ENCODE measurements at regions of chr12 and their contacts with region 1.

Region 1: DNA sequence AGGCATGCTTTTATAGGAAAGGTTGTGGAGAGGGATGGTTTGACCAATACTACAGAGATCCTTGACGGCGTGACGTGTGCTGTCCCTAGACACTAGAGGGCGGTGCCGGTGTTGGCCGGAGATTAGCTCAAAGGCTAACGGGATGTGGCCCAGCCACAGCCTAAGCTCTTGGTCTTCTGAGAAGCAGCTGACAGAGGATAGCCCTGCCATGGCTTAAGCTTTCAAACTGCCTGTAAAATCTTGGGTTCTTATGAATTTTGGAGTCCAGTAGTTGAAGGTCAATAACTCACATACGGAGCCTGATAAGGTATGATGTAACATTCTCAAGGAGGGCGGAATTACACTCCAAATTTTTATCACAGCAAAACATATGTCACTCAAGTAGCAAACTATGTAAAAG is 515.7 kb upstream of the ATXN7L3B start:
- DNase-seq: peak; percentile 68
- H3K4me3 Mint-ChIP-seq: no peak overlapping the region
- H3K27ac Mint-ChIP-seq: no peak overlapping the region
- H3K4me1 Mint-ChIP-seq: no peaks in the 10 kb centered on the region
- H3K27me3 Mint-ChIP-seq: no peaks in the 10 kb centered on the region
- CTCF ChIP-seq: peak; percentile 56

Region 2: DNA sequence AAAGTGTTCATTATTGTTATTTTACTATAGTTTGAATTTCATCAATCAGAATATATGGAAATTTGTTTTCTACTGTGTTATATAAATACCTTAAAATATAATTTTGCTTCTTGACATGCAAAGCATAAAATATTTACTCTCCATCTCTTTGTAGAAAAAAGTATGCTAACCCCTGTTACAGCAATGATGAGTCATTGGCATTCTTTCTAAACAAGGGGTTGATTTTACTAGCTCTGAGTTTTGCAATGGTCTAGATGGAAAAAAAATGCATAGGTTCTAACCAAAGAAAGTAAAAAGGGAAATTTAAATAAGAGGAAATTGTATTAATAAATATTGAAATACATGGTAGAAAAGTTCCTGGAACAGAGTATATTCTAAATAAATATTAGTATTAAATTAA is 474.5 kb before region 1 on chr12:
- CTCF ChIA-PET with region 1: no interaction called
- POLR2A ChIA-PET with region 1: no interaction called
- intact Hi-C with region 1: no loop called
- DNase-seq: peak; percentile 58
- H3K4me3 Mint-ChIP-seq: no peak overlapping the region
- H3K27ac Mint-ChIP-seq: no peak overlapping the region
- H3K4me1 Mint-ChIP-seq: peaks cover 6% of the 10 kb centered on the region
- H3K27me3 Mint-ChIP-seq: no peaks in the 10 kb centered on the region
- CTCF ChIP-seq: no peak

Region 3: DNA sequence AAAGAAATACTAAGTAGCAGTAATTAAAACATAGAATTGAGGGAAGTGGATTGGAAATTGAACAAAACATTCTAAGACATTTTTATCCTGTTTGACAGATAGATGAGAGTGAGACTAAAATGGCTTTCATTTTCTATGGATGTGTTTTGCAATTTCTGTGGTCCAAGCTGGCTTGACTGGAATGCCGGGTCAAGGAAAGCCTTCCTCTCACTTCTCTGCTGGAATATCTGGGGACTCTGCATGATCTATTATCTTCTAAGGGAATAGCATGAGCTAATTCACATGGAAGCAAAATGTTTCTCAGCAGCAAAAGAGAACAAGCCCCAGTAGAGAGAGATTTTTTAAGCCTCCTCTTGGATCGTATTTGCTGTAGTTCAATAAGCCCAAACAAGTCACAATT is 107.8 kb after region 1 on chr12:
- CTCF ChIA-PET with region 1: no interaction called
- POLR2A ChIA-PET with region 1: no interaction called
- intact Hi-C with region 1: no loop called
- DNase-seq: no peak
- H3K4me3 Mint-ChIP-seq: no peak overlapping the region
- H3K27ac Mint-ChIP-seq: no peak overlapping the region
- H3K4me1 Mint-ChIP-seq: no peaks in the 10 kb centered on the region
- H3K27me3 Mint-ChIP-seq: no peaks in the 10 kb centered on the region
- CTCF ChIP-seq: no peak

Region 4: GRCh38 chr12:74317078-74317601 is 295.2 kb after region 1 on chr12:
- CTCF ChIA-PET with region 1: interaction called, 4 read pairs
- POLR2A ChIA-PET with region 1: interaction called, 3 read pairs
- intact Hi-C with region 1: loop called (anchors 1 kb)
- DNase-seq: peak; percentile 62
- H3K4me3 Mint-ChIP-seq: no peak overlapping the region
- H3K27ac Mint-ChIP-seq: no peak overlapping the region
- H3K4me1 Mint-ChIP-seq: peaks cover 14% of the 10 kb centered on the region
- H3K27me3 Mint-ChIP-seq: no peaks in the 10 kb centered on the region
- CTCF ChIP-seq: peak; percentile 52

Region 5: GRCh38 chr12:74365178-74365964 is 343.4 kb after region 1 on chr12:
- CTCF ChIA-PET with region 1: no interaction called
- POLR2A ChIA-PET with region 1: no interaction called
- intact Hi-C with region 1: loop called (anchors 1 kb)
- DNase-seq: peak; percentile 50
- H3K4me3 Mint-ChIP-seq: no peak overlapping the region
- H3K27ac Mint-ChIP-seq: no peak overlapping the region
- H3K4me1 Mint-ChIP-seq: peaks cover 5% of the 10 kb centered on the region
- H3K27me3 Mint-ChIP-seq: no peaks in the 10 kb centered on the region
- CTCF ChIP-seq: no peak

Region 6: DNA sequence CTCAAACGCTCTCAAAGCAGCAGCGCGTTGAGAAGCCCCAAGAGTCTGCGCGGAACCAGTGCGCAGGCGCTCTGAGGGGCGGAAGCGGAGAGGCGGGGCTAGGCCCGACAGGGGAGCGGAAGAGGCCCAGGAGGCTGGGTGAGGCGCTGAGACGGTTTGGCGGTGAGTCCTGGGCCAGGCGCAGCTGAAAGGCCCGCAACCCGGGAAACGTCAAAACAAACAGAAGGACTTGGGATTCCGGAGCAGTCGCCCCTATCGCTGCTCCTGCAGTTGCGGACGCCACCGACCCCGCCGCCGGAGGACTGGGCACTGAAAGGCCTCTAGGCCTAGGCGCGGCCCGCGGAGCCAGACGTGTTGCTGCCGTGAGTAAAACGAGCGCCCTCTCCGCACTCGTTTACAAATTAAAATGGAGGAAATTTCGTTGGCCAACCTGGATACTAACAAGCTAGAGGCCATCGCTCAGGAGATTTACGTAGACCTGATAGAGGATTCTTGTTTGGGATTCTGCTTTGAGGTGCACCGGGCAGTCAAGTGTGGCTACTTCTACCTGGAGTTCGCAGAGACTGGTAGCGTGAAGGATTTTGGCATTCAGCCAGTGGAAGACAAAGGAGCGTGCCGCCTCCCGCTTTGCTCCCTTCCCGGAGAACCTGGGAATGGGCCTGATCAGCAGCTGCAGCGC is 515.9 kb after region 1 on chr12 and contains the start of gene ATXN7L3B:
- CTCF ChIA-PET with region 1: interaction called, 3 read pairs
- POLR2A ChIA-PET with region 1: no interaction called
- intact Hi-C with region 1: loop called (anchors 10 kb)
- DNase-seq: peak; percentile 95
- H3K4me3 Mint-ChIP-seq: peak within 1 kb of the TSS; percentile 97
- H3K27ac Mint-ChIP-seq: peak within 1 kb of the TSS; percentile 100
- H3K4me1 Mint-ChIP-seq: peaks cover 34% of the 10 kb centered on the region
- H3K27me3 Mint-ChIP-seq: no peaks in the 10 kb centered on the region
- CTCF ChIP-seq: no peak
- total RNA-seq, gene ATXN7L3B: 21.1 and 28.2 TPM in 2 replicates

Measured in MCF 10A (cell line).